Natural killer cell (primary cell): ENCODE measurements at regions of chr2 and their contacts with region 1.

Region 1: DNA sequence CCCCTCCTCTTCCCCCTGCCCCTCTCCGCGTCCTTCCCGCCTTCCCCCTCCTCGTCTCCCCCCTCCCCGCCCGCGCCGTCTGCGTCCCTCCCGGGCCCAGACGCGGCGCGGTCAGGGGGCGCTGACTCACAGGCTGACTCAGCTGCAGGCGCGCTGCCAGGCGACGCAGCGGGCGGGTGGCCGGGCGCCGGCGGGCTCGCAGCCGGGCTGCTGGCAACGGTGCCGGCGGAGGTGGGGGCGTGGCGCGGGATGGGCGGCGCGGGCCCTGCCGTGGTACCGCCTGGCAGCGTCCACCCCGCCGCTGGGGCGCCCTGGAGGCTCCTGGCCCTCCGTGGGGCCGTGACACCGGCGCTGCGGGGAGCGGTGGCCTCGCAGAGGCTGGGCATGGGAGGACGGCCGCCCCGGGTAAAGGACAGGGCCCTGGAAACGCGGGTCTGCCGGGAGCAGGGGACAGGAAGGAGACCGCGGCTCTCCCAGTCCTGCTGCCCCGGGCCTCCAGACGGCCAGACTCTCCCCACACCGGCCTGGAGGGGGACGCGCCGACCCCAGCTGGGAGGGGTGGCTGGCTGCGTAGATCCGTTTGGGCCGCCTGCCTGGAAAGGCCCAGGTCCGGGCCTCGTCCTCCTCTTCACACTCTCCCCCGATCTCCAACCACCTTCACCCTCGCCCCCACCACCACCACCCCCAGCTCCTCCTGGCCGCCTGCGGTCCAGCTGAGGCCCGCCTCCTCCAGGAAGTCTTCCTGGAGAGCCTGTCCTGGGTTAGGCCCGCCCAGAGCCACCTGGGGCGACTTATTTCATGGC is 10.0 kb upstream of the PROC start:
- DNase-seq: peak; percentile 92 to 93
- ATAC-seq: peak; percentile 88 to 96 (median 93)
- H3K4me3 ChIP-seq: peak overlapping the region; percentile 30
- H3K4me3 Mint-ChIP-seq: peak overlapping the region; percentile 76
- H3K27ac ChIP-seq: no peak overlapping the region
- H3K27ac Mint-ChIP-seq: peak overlapping the region; percentile 74 to 88
- H3K4me1 ChIP-seq: peaks cover 10% of the 10 kb centered on the region
- H3K4me1 Mint-ChIP-seq: peaks cover 0 to 9% of the 10 kb centered on the region in 2 donors
- H3K27me3 ChIP-seq: no peaks in the 10 kb centered on the region
- H3K27me3 Mint-ChIP-seq: peaks cover 7 to 18% of the 10 kb centered on the region in 2 donors
- CTCF ChIP-seq: no peak

Region 2: GRCh38 chr2:127086990-127087790 is 321.0 kb before region 1 on chr2:
- intact Hi-C with region 1: loop called (anchors 10 kb)
- DNase-seq: no peak
- ATAC-seq: no peak
- H3K4me3 ChIP-seq: no peak overlapping the region
- H3K4me3 Mint-ChIP-seq: peak overlapping the region; percentile 53
- H3K27ac ChIP-seq: peak overlapping the region; percentile 32
- H3K27ac Mint-ChIP-seq: peak overlapping the region; percentile 62 to 87
- H3K4me1 ChIP-seq: peaks cover 67% of the 10 kb centered on the region
- H3K4me1 Mint-ChIP-seq: peaks cover 38 to 55% of the 10 kb centered on the region in 2 donors
- H3K27me3 ChIP-seq: no peaks in the 10 kb centered on the region
- H3K27me3 Mint-ChIP-seq: peaks cover 0 to 7% of the 10 kb centered on the region in 2 donors
- CTCF ChIP-seq: no peak

Region 3: GRCh38 chr2:127355386-127356008 is 52.7 kb before region 1 on chr2:
- intact Hi-C with region 1: loop called (anchors 2 kb)
- DNase-seq: peak in 1 of 2 donors; percentile 74
- ATAC-seq: peak; percentile 65 to 72 (median 68)
- H3K4me3 ChIP-seq: no peak overlapping the region
- H3K4me3 Mint-ChIP-seq: no peak overlapping the region
- H3K27ac ChIP-seq: no peak overlapping the region
- H3K27ac Mint-ChIP-seq: peak overlapping the region; percentile 10 to 67
- H3K4me1 ChIP-seq: peaks cover 4% of the 10 kb centered on the region
- H3K4me1 Mint-ChIP-seq: peaks cover 63 to 71% of the 10 kb centered on the region in 2 donors
- H3K27me3 ChIP-seq: no peaks in the 10 kb centered on the region
- H3K27me3 Mint-ChIP-seq: no peaks in the 10 kb centered on the region
- CTCF ChIP-seq: peak; percentile 62

Region 4: DNA sequence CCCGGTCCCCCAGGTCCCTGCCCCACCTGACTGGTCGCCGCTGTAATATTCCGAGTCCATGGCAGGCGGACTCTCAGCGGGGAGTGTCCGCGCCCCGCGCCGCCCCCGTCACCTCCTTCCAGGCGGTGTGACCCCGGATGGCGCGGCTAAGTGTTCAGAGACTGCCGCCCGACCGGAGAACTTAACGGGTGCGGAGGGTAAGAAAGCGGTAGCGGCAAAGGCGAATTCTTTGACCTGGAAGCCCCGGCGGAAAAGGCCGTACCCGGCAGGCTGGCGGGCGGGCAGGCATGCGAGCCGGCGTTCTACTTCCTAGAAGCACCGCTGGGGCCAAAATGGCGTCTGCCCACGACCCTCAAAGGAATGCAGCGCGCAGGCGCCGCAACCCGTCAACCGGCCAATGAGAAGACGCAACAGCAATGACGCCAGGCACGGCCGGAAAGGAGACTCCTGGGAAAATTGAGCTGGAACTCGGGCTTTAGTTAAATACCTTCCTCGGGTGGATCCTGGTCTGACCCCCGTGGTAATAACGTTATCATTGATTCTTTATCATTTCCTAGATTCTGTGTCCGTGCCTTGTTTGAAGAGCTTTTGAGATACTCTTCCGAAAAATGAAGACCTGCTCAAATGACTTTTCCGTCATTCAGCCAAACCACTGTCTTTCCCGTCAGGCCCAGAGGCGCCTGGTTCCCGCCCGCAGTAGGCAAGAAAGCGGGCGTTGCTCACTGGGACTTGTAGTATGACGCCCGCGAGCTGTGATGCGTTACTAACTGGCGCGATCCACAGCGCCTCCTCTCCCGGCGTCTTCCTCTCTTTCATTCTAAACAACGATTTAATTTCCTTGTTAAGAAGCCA is 118.2 kb after region 1 on chr2 and contains the start of gene IWS1:
- intact Hi-C with region 1: loop called (anchors 1 kb)
- DNase-seq: peak; percentile 90 to 98
- ATAC-seq: peak; percentile 87 to 94 (median 90)
- H3K4me3 ChIP-seq: peak within 1 kb of the TSS; percentile 87
- H3K4me3 Mint-ChIP-seq: peak within 1 kb of the TSS; percentile 93
- H3K27ac ChIP-seq: peak within 1 kb of the TSS; percentile 94
- H3K27ac Mint-ChIP-seq: peak within 1 kb of the TSS; percentile 96 to 98
- H3K4me1 ChIP-seq: peaks cover 21% of the 10 kb centered on the region
- H3K4me1 Mint-ChIP-seq: peaks cover 37 to 43% of the 10 kb centered on the region in 2 donors
- H3K27me3 ChIP-seq: peaks cover 3% of the 10 kb centered on the region
- H3K27me3 Mint-ChIP-seq: peaks cover 9 to 13% of the 10 kb centered on the region in 2 donors
- CTCF ChIP-seq: peak; percentile 25
- total RNA-seq, gene IWS1: 21.7 to 27.1 (median 23.9) TPM